ENCODE measurements at regions of chr1 and their contacts with region 1.

Region 1: DNA sequence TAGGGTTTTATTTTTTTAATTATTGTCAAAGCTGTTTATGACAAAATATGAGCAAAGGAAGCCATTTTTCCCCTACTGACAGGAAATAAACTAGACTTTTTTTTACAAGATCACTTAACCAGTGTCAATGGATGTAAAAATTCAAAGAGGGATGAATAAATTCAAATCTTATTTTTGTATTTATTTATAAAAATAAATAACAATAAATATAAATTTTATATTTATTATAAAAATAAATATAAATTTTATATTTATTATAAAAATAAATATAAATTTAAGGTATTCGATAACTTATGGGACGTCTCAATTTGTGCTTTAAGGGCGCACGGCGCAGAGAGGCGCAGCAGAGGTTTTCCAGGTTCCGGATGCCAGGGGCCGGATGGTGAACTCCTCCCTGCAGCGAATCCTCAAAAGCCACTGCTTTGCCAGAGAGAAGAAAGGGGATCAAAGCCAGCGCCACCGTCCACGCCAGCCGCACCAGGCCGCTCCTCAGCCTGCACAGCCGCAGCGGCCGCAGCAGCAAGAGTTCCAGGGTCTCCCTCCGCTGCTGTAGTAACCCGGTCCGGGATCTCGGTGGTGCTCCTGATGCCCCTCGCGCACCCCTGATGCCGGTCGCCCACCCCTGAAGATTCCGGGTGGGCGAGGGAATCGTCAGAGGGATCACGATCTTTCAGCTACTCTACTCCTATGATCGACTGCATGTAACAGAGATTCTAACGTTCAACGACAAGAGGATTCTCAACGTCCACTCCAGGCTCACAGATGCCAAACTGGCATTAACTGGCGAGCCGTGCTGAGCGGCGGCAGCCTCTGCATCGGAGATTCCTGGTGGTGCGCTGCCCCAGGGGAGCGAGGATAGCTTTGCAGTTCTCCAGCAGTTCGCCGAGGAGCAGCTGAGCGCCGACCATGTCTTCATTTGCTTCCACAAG is 28.5 kb upstream of the RLF start:
- DNase-seq: no peak
- H3K4me3 ChIP-seq: peak overlapping the region in 1 of 3 experiments; percentile 11
- H3K27ac ChIP-seq: no peak overlapping the region
- H3K4me1 ChIP-seq: peaks cover 6% of the 10 kb centered on the region
- H3K27me3 ChIP-seq: peaks cover 2% of the 10 kb centered on the region
- CTCF ChIP-seq: no peak

Region 2: DNA sequence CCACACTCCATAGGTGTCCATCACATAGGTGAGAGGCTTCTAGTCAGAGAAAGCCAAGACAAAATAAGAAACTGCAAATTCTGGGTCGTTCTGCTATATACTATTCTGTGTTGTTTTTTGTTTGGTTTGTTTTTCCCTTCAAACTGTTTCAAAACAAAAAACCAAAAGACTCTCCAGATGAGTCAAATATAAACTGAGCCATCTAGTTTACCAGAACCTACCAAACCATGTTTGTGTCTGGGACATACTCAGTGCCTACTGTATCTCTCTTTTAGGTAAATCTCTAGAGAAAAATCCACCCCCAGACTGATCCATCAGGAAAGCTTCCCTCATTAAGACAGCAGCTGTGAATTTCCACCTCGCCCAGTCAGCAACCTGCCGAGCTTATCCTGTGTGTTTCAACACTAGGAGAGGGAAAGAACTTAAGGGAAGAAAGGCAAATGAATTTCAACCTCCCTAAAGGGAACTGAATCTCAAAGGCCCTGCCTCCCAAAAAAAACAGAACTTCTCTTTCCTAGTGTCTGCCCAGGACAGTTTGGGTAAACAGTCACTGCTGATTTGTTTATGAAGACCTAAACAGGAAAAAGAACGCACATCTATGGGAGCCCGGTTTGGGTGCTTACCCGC is 52.8 kb before region 1 on chr1:
- CTCF ChIA-PET with region 1: no interaction called
- dilution Hi-C with region 1: no loop called
- in situ Hi-C with region 1: no loop called
- intact Hi-C with region 1: loop called (anchors 1 kb)
- DNase-seq: no peak
- H3K4me3 ChIP-seq: no peak overlapping the region
- H3K27ac ChIP-seq: no peak overlapping the region
- H3K4me1 ChIP-seq: peaks cover 7% of the 10 kb centered on the region
- H3K27me3 ChIP-seq: no peaks in the 10 kb centered on the region
- CTCF ChIP-seq: no peak

Region 3: DNA sequence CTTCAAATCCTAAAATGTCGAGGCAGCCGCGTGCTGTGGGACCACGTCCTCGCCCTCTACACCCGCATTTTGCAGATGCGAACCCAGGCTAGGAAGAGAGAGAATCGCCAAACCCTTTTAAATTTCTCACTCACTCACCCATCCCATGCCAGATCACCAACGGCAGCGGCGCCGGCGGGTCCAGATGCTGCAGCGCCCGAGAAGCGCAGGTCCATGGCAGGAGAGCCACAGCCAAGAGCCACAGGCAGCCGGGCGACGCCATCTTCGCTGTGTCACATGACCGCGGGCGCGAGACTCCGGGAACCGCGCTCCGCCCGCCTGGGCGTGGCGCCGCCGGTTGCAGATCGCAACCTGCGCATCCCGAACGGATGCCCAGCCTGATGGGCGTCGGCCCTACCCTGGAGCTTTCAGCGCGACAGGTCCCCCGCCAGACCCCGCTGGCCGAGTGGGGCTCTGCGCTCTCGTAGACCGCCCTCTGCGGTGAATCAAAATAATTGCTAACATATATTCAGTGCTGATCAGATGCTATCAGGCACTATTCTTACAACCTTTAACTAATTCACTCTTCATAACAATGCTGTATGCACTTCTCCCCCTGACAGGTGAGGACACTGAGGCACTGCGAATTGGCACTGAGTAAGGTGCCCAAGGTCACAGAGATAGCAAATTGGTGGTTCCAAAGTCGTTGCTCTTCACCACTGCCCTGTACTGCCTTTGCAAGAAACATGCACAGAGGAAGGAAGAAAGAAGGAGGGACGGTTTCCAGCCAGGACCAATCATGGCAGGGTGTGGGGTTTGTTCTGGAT is 35.5 kb before region 1 on chr1 and contains the start of gene PPT1:
- CTCF ChIA-PET with region 1: no interaction called
- dilution Hi-C with region 1: no loop called
- in situ Hi-C with region 1: loop called in 1 of 2 experiments (anchors 5 kb)
- intact Hi-C with region 1: loop called (anchors 5 kb)
- DNase-seq: peak; percentile 71
- H3K4me3 ChIP-seq: peak within 1 kb of the TSS; percentile 65 to 76 (median 71)
- H3K27ac ChIP-seq: no peak within 1 kb of the TSS
- H3K4me1 ChIP-seq: peaks cover 9% of the 10 kb centered on the region
- H3K27me3 ChIP-seq: no peaks in the 10 kb centered on the region
- CTCF ChIP-seq: peak in 1 of 2 donors; percentile 24
- total RNA-seq, gene PPT1: 22.5 to 36.9 TPM